ENCODE measurements at regions of chr19 and their contacts with region 1.

Region 1: GRCh38 chr19:2391118-2391725 is 31.2 kb downstream of the TMPRSS9 start:
- DNase-seq: no peak
- ATAC-seq: peak; percentile 56
- H3K4me3 Mint-ChIP-seq: no peak overlapping the region
- H3K27ac Mint-ChIP-seq: peak overlapping the region; percentile 74
- H3K4me1 Mint-ChIP-seq: peaks cover 34% of the 10 kb centered on the region
- H3K27me3 Mint-ChIP-seq: no peaks in the 10 kb centered on the region
- CTCF ChIP-seq: peak; percentile 82

Region 2: DNA sequence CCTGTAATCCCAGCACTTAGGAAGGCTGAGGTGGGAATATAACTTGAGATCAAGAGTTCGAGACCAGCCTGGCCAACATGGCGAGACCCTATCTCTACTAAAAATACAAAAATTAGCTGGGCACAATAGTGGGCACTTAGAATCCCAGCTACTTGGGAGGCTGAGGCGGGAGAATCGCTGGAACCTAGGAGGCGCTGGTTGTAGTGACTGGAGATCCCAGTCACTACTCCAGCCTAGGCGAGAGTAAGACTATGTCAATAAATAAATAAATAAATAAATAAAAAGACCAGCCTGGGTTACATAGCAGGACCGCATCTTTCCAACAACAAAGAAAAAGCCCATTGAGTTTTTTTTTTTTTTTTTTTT is 229.6 kb before region 1 on chr19:
- CTCF ChIA-PET with region 1: interaction called, 3 read pairs
- POLR2A ChIA-PET with region 1: interaction called, 12 read pairs
- intact Hi-C with region 1: loop called (anchors 1 kb)
- DNase-seq: no peak
- ATAC-seq: no peak
- H3K4me3 Mint-ChIP-seq: no peak overlapping the region
- H3K27ac Mint-ChIP-seq: peak overlapping the region; percentile 18
- H3K4me1 Mint-ChIP-seq: peaks cover 22% of the 10 kb centered on the region
- H3K27me3 Mint-ChIP-seq: no peaks in the 10 kb centered on the region
- CTCF ChIP-seq: no peak

Region 3: DNA sequence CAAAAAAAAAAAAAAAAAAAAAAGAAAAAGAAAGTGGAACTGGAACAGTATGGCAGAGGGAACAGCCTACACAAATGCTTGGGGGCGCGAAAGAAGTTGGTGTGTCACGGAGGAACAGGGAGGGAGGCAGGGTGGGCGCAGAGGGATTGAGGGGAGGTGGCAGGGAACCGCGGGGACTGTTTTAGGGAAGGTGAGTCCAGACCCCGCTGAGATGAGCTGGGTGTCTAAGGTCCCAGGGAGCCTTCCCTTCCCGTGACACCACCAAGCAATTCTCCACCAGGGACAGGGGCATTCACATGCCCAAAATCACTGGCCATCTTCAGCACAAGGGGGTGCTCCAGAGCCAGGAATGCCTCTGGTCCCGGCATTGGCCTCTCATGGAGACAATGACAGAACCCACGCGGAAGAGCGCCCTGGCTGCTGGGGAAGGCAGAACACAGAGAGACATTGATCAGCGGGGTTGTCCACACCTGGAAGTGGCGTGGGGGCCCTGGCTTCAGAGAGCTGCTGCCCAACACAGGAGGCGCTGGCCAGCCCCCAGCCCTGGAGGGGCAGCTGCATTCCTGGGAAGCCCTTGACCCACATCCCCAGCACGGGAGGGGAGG is 116.2 kb before region 1 on chr19:
- CTCF ChIA-PET with region 1: interaction called, 6 read pairs
- POLR2A ChIA-PET with region 1: interaction called, 10 read pairs
- intact Hi-C with region 1: loop called (anchors 1 kb)
- DNase-seq: no peak
- ATAC-seq: no peak
- H3K4me3 Mint-ChIP-seq: peak overlapping the region; percentile 28
- H3K27ac Mint-ChIP-seq: peak overlapping the region; percentile 66
- H3K4me1 Mint-ChIP-seq: peaks cover 52% of the 10 kb centered on the region
- H3K27me3 Mint-ChIP-seq: no peaks in the 10 kb centered on the region
- CTCF ChIP-seq: no peak

Region 4: DNA sequence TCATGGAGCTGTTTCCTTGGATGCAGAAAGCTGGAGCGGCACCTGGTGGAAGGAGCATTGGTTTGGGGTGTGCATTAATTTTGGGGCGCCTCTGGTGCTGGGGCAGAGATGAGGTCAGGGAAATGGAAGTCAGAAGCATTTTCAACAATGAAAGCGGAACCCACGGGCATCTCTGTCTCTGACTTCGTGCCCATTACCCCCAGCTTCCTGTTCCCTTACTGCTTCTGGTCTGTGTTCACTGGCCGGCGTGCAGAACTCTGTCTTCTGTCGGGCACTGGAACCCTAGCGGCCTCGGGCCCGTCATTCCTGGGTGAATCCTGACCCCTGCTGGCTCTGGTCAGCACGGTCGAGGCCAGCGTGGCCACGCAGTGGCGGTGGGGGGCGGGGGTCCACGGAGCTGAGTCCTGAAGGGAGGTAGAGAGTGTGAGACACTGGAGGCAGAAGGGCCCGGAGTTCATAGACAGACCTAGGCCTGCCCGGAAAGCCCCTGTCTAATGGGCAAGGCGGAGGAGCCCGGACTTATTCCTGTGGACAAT is 75.3 kb before region 1 on chr19:
- CTCF ChIA-PET with region 1: interaction called, 4 read pairs
- POLR2A ChIA-PET with region 1: interaction called, 13 read pairs
- intact Hi-C with region 1: no loop called
- DNase-seq: peak; percentile 54
- ATAC-seq: peak; percentile 74
- H3K4me3 Mint-ChIP-seq: peak overlapping the region; percentile 59
- H3K27ac Mint-ChIP-seq: peak overlapping the region; percentile 82
- H3K4me1 Mint-ChIP-seq: peaks cover 55% of the 10 kb centered on the region
- H3K27me3 Mint-ChIP-seq: no peaks in the 10 kb centered on the region
- CTCF ChIP-seq: no peak

Region 5: GRCh38 chr19:2636897-2637683 is 245.9 kb after region 1 on chr19:
- CTCF ChIA-PET with region 1: interaction called, 4 read pairs
- POLR2A ChIA-PET with region 1: no interaction called
- intact Hi-C with region 1: loop called (anchors 5 kb)
- DNase-seq: peak; percentile 74
- ATAC-seq: peak; percentile 52
- H3K4me3 Mint-ChIP-seq: peak overlapping the region; percentile 53
- H3K27ac Mint-ChIP-seq: peak overlapping the region; percentile 74
- H3K4me1 Mint-ChIP-seq: peaks cover 87% of the 10 kb centered on the region
- H3K27me3 Mint-ChIP-seq: no peaks in the 10 kb centered on the region
- CTCF ChIP-seq: peak; percentile 31

Region 6: GRCh38 chr19:2691951-2692350 is 300.7 kb after region 1 on chr19:
- CTCF ChIA-PET with region 1: no interaction called
- POLR2A ChIA-PET with region 1: no interaction called
- intact Hi-C with region 1: no loop called
- DNase-seq: no peak
- ATAC-seq: no peak
- H3K4me3 Mint-ChIP-seq: no peak overlapping the region
- H3K27ac Mint-ChIP-seq: peak overlapping the region; percentile 46
- H3K4me1 Mint-ChIP-seq: peaks cover 57% of the 10 kb centered on the region
- H3K27me3 Mint-ChIP-seq: no peaks in the 10 kb centered on the region
- CTCF ChIP-seq: no peak